ENCODE measurements at regions of chr15 and their contacts with region 1.

Region 1: GRCh38 chr15:64809649-64810496 is 15.6 kb downstream of the PIF1 start:
- DNase-seq: peak; percentile 77 to 88 (median 83)
- ATAC-seq: peak; percentile 78 to 82 (median 81)
- H3K4me3 ChIP-seq: no peak overlapping the region
- H3K27ac ChIP-seq: peak overlapping the region in 1 of 12 donors; percentile 90
- H3K4me1 ChIP-seq: peaks cover 0 to 16% (median 0%) of the 10 kb centered on the region in 12 donors
- H3K27me3 ChIP-seq: no peaks in the 10 kb centered on the region
- CTCF ChIP-seq: peak; percentile 78 to 93 (median 89)
- POLR2A ChIP-seq: no peak

Region 2: GRCh38 chr15:63466378-63467192 is 1343.3 kb before region 1 on chr15:
- intact Hi-C with region 1: no loop called
- DNase-seq: peak in 2 of 5 donors; percentile 25 to 32
- ATAC-seq: peak; percentile 44 to 85 (median 82)
- H3K4me3 ChIP-seq: no peak overlapping the region
- H3K27ac ChIP-seq: no peak overlapping the region
- H3K4me1 ChIP-seq: peaks cover 0 to 11% (median under 1%) of the 10 kb centered on the region in 12 donors
- H3K27me3 ChIP-seq: no peaks in the 10 kb centered on the region
- CTCF ChIP-seq: peak; percentile 46 to 71 (median 59)
- POLR2A ChIP-seq: no peak

Region 3: GRCh38 chr15:64355348-64355943 is 454.4 kb before region 1 on chr15:
- intact Hi-C with region 1: no loop called
- DNase-seq: peak in 2 of 5 donors; percentile 14 to 60
- ATAC-seq: peak; percentile 7 to 40 (median 29)
- H3K4me3 ChIP-seq: peak overlapping the region; percentile 59 to 98 (median 84)
- H3K27ac ChIP-seq: peak overlapping the region; percentile 16 to 85 (median 76)
- H3K4me1 ChIP-seq: peaks cover 0 to 38% (median 16%) of the 10 kb centered on the region in 12 donors
- H3K27me3 ChIP-seq: no peaks in the 10 kb centered on the region
- CTCF ChIP-seq: no peak
- POLR2A ChIP-seq: no peak

Region 4: DNA sequence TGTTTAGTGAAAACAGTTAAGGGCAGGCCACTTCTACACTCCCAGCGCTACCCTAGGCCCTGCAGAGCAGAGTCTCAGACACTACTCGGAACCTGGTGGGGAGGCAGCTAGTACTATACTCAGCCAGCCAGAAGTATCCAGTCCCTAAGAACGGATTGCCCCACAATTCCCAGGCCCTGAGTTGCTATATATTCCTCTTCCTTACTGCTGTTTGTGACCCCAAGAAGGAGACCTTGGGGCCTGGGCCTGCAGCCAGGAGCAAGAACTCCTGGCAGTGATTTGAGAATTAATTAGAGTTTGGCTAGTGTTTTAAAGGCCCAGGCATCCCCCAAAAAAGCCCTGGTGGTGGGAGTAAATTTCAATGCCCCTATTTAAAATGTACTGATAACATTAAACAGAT is 122.2 kb before region 1 on chr15:
- intact Hi-C with region 1: loop called in 8 of 10 experiments (anchors 2 to 10 kb)
- DNase-seq: no peak
- ATAC-seq: peak in 3 of 4 donors; percentile 3 to 9 (median 8)
- H3K4me3 ChIP-seq: no peak overlapping the region
- H3K27ac ChIP-seq: peak overlapping the region in 10 of 12 donors; percentile 31 to 67 (median 54)
- H3K4me1 ChIP-seq: peaks cover 4 to 68% (median 49%) of the 10 kb centered on the region in 12 donors
- H3K27me3 ChIP-seq: no peaks in the 10 kb centered on the region
- CTCF ChIP-seq: no peak
- POLR2A ChIP-seq: no peak

Region 5: GRCh38 chr15:64740311-64741170 is 69.3 kb before region 1 on chr15:
- intact Hi-C with region 1: loop called in 5 of 10 experiments (anchors 2 to 5 kb)
- DNase-seq: peak; percentile 58 to 87 (median 72)
- ATAC-seq: peak; percentile 88 to 91 (median 90)
- H3K4me3 ChIP-seq: peak overlapping the region in 6 of 12 donors; percentile 1 to 40 (median 12)
- H3K27ac ChIP-seq: peak overlapping the region; percentile 7 to 90 (median 60)
- H3K4me1 ChIP-seq: peaks cover 0 to 59% (median 24%) of the 10 kb centered on the region in 12 donors
- H3K27me3 ChIP-seq: no peaks in the 10 kb centered on the region
- CTCF ChIP-seq: peak in 10 of 12 donors; percentile 10 to 54 (median 38)
- POLR2A ChIP-seq: peak in 1 of 2 donors; percentile 10

Region 6: GRCh38 chr15:64761156-64761555 is 48.7 kb before region 1 on chr15:
- intact Hi-C with region 1: no loop called
- DNase-seq: peak in 1 of 5 donors; percentile 42
- ATAC-seq: peak in 3 of 4 donors; percentile 19 to 37 (median 28)
- H3K4me3 ChIP-seq: no peak overlapping the region
- H3K27ac ChIP-seq: peak overlapping the region in 10 of 12 donors; percentile 33 to 90 (median 76)
- H3K4me1 ChIP-seq: peaks cover 0 to 74% (median 29%) of the 10 kb centered on the region in 12 donors
- H3K27me3 ChIP-seq: no peaks in the 10 kb centered on the region
- CTCF ChIP-seq: no peak
- POLR2A ChIP-seq: no peak

Region 7: GRCh38 chr15:64775551-64776401 is 34.1 kb before region 1 on chr15 and contains the start of gene RBPMS2:
- intact Hi-C with region 1: loop called in 2 of 10 experiments (anchors 5 kb)
- DNase-seq: peak; percentile 57 to 75 (median 62)
- ATAC-seq: peak in 3 of 4 donors; percentile 60 to 70 (median 67)
- H3K4me3 ChIP-seq: peak within 1 kb of the TSS; percentile 44 to 97 (median 74)
- H3K27ac ChIP-seq: peak within 1 kb of the TSS; percentile 82 to 98 (median 92)
- H3K4me1 ChIP-seq: peaks cover 0 to 40% (median 8%) of the 10 kb centered on the region in 12 donors
- H3K27me3 ChIP-seq: peaks cover 0 to 27% (median 0%) of the 10 kb centered on the region in 9 donors
- CTCF ChIP-seq: no peak
- POLR2A ChIP-seq: no peak
- total RNA-seq, gene RBPMS2: 49.8 to 530 (median 189) TPM

Region 8: GRCh38 chr15:64877435-64877834 is 67.6 kb after region 1 on chr15:
- intact Hi-C with region 1: no loop called
- DNase-seq: peak; percentile 82 to 91 (median 83)
- ATAC-seq: peak; percentile 59 to 87 (median 75)
- H3K4me3 ChIP-seq: no peak overlapping the region
- H3K27ac ChIP-seq: peak overlapping the region; percentile 32 to 95 (median 75)
- H3K4me1 ChIP-seq: peaks cover 0 to 86% (median 27%) of the 10 kb centered on the region in 12 donors
- H3K27me3 ChIP-seq: no peaks in the 10 kb centered on the region
- CTCF ChIP-seq: no peak
- POLR2A ChIP-seq: no peak

Measured in heart left ventricle (tissue), 16 donors.